ENCODE measurements at regions of chr3 and their contacts with region 1.

Region 1: GRCh38 chr3:33787328-33788009 is 11.0 kb upstream of the PDCD6IP start:
- DNase-seq: peak; percentile 66
- CTCF ChIP-seq: peak; percentile 85

Region 2: DNA sequence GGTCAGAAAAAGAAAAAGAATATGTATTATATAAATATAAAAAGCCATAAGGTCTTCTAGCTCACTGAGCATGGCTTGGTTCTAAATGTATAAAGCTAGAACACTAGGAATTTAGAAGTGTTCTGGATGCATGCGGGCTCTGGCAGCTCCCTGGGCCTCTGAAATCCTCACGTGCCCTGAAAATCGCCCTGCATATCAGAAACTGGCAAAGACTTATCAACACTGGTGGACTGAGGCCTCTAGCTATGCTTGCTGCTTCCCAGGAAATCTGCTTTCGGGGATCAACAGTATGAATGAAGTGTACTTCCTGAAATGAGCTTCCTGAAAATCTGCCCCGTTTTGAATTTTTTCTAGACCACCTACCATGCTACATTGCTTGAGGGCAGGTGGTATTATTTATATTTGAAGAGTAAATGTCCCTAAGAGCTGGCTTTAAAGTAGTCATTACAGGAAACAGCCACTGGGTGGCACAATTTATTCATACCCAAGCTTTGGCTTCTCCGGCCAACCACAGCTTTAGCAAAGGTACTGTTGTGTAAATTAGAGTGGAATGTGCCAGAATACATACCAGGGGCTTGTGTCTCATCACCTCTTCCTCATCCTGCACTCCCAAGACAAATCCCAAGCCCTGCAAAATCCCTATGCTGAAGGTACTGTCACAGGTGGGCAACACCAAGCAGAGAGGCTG is 656.0 kb before region 1 on chr3:
- CTCF ChIA-PET with region 1: interaction called, 36 read pairs
- POLR2A ChIA-PET with region 1: no interaction called
- DNase-seq: peak; percentile 76
- CTCF ChIP-seq: peak; percentile 65

Region 3: DNA sequence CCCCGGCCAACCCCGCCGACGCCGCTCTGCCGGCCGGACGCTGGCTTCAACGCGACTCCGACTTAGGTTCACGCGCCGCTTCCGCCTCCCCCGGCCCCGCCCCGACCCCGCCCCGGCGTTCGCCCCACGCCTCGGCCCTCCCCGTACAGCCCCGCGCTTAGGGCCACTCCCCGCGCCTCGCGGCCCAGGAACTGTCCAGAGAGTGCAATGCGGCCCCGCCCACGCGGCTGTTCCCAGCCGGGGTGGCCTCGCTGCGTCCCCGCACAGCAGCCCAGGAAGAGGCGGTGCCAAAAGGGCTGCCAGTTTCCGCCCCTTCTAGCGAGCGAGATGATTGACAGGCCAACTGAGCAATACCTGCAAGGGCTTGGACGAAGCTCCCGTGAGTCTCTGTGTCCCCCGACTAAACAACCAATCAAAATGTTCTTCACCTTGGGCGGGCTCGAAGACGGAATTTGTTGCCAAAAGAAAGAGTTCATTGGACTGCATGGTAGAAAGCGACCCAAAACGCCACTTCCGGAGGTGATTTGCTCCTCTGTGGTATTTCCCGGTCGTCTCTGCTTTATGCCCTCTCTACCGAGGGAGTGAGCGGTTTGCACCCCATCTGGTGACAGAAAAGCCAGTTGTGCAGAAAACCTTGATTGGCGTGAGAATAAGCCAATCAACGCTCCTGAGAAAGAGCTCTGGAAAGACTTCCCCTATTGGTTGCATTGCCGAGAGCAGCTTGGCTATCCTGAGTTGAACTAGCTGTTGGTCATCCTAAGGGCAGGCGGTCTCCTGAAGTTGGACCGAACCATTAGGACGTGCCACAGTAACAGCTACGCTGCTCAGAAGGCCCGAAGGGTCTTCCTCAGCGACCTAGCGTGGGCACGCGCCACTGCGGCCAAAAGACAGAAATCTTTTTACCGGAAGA is 346.9 kb before region 1 on chr3 and contains the start of gene UBP1:
- CTCF ChIA-PET with region 1: interaction called, 13 read pairs
- POLR2A ChIA-PET with region 1: no interaction called
- DNase-seq: peak; percentile 96
- CTCF ChIP-seq: no peak

Region 4: DNA sequence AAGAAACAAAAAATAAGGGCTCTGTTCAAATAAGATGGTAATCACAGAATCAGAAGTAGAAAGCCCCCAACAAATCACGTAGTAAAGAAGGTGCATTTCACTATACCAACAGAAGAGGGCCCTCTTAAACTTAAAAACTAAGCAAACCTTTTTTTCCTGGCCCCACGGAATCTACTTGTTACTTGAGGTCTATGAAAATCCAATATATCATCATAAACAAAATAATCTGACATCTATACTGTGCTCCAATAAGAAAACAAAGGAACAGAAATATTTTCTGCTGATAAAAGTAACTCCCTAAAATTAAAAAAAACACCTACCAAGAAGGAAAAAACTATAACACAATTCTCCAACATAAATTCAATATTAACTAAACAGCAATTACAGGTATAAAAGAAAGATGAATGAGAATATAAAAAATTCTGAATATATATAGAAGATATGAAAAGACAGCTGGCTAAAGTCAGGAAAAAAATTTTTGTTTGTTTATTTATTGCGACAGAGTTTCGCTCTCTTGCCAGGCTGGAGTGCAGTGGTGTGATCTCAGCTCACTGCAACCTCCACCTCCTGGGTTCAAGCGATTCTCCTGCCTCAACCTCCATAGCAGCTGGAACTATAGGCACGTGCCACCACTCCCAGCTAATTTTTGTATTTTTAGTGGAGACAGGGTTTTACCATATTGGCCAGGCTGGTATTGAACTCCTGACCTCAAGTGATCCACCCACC is 151.2 kb before region 1 on chr3:
- CTCF ChIA-PET with region 1: interaction called, 51 read pairs
- POLR2A ChIA-PET with region 1: no interaction called
- DNase-seq: peak; percentile 37
- CTCF ChIP-seq: peak; percentile 39

Region 5: DNA sequence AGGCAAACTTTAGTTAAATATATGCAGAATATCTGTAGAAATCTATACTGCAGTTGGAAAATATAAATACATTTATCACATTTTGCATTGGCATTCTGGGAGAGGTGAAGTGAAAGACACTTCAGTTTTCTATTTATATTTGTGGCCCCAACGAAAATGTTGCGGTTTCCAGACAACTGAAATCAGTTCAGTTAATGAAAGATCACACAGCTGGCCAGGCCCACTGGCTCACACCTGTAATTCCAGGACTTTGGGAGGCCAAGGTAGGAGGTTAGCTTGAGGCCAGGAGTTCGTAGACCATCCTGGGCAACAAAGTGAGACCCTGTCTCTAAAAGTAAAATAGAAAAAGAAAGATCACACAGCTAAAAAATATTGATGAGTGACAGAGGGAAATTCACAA is 57.5 kb before region 1 on chr3:
- CTCF ChIA-PET with region 1: interaction called, 12 read pairs
- POLR2A ChIA-PET with region 1: no interaction called
- DNase-seq: no peak
- CTCF ChIP-seq: no peak

Region 6: DNA sequence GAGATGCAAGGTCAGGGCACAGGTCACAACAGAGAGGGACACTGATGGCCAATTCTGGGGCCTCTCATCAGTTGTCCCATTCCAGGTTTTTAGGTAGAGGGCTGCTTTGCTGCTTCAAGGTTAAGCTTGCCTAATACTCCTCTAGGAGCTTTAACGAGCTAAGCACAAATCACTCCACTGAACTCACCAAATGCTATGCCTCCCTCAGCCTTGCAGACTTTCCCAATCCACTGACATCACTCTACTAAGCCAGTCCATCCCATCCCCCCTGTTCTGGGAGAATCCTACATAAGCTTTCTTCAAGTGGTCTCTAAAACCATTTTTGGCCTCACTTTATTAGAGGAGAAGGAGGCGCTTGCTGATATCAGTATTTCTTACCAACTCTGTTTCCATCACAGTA is 13.8 kb before region 1 on chr3:
- CTCF ChIA-PET with region 1: interaction called, 106 read pairs
- POLR2A ChIA-PET with region 1: no interaction called
- DNase-seq: no peak
- CTCF ChIP-seq: no peak